ENCODE measurements at regions of chr18 and their contacts with region 1.

Region 1: GRCh38 chr18:76803814-76804213 is 18.5 kb upstream of the ZNF236 start:
- DNase-seq: peak; percentile 46 to 82 (median 75)
- ATAC-seq: peak; percentile 84
- H3K4me3 ChIP-seq: no peak overlapping the region
- H3K4me3 Mint-ChIP-seq: peak overlapping the region; percentile 43
- H3K27ac ChIP-seq: no peak overlapping the region
- H3K27ac Mint-ChIP-seq: no peak overlapping the region
- H3K4me1 ChIP-seq: peaks cover 7% of the 10 kb centered on the region
- H3K4me1 Mint-ChIP-seq: peaks cover 12% of the 10 kb centered on the region
- H3K27me3 ChIP-seq: peaks cover 0 to 5% of the 10 kb centered on the region in 2 experiments
- H3K27me3 Mint-ChIP-seq: peaks cover 16% of the 10 kb centered on the region
- CTCF ChIP-seq: peak; percentile 74

Region 2: GRCh38 chr18:76730901-76731300 is 72.9 kb before region 1 on chr18:
- CTCF ChIA-PET with region 1: no interaction called
- POLR2A ChIA-PET with region 1: no interaction called
- intact Hi-C with region 1: no loop called
- DNase-seq: no peak
- ATAC-seq: no peak
- H3K4me3 ChIP-seq: no peak overlapping the region
- H3K4me3 Mint-ChIP-seq: no peak overlapping the region
- H3K27ac ChIP-seq: no peak overlapping the region
- H3K27ac Mint-ChIP-seq: no peak overlapping the region
- H3K4me1 ChIP-seq: no peaks in the 10 kb centered on the region
- H3K4me1 Mint-ChIP-seq: peaks cover 5% of the 10 kb centered on the region
- H3K27me3 ChIP-seq: no peaks in the 10 kb centered on the region
- H3K27me3 Mint-ChIP-seq: peaks cover 11% of the 10 kb centered on the region
- CTCF ChIP-seq: no peak

Region 3: GRCh38 chr18:76783759-76784484 is 19.9 kb before region 1 on chr18:
- CTCF ChIA-PET with region 1: interaction called, 69 read pairs
- POLR2A ChIA-PET with region 1: no interaction called
- intact Hi-C with region 1: no loop called
- DNase-seq: no peak
- ATAC-seq: no peak
- H3K4me3 ChIP-seq: no peak overlapping the region
- H3K4me3 Mint-ChIP-seq: no peak overlapping the region
- H3K27ac ChIP-seq: no peak overlapping the region
- H3K27ac Mint-ChIP-seq: no peak overlapping the region
- H3K4me1 ChIP-seq: no peaks in the 10 kb centered on the region
- H3K4me1 Mint-ChIP-seq: no peaks in the 10 kb centered on the region
- H3K27me3 ChIP-seq: peaks cover 0 to 3% of the 10 kb centered on the region in 2 experiments
- H3K27me3 Mint-ChIP-seq: peaks cover 27% of the 10 kb centered on the region
- CTCF ChIP-seq: no peak

Region 4: DNA sequence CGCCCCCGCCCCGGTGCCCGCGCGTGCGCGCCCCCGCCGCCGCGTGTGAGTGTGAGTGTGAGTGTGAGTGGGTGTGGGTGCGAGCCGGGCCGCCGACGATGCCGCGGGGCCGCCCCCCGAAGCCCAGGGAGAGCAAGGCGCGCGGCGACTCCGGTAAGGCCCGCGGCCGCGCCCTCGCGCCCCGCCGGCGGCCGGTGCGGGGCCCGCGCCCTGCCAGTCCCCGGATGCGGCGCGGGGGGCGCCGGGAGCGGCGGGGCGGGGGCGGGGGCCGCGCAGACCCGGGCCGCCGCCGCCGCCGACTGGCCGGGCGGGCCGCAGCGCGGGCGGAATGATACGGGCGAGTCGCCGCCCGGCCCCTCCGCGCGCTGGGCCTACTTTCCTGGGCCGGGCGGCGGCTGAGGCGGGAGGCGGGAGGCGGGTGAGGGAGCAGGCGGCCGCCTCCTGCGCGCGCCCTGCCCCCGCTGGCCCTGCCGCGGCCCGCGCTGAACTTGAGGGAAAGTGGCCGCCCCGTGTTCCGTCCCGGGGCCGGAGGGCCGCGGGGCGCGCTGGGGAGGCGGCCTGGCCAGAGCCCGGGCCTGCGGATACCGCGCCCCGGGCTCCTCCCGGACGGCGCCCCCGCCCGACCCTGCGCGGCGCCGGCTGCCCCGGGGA is 18.8 kb after region 1 on chr18 and contains the start of gene ZNF236:
- CTCF ChIA-PET with region 1: interaction called, 22 read pairs
- POLR2A ChIA-PET with region 1: interaction called, 3 read pairs
- intact Hi-C with region 1: loop called in 1 of 2 experiments (anchors 1 kb)
- DNase-seq: peak; percentile 43 to 86 (median 68)
- ATAC-seq: peak; percentile 50
- H3K4me3 ChIP-seq: peak within 1 kb of the TSS; percentile 75 to 97
- H3K4me3 Mint-ChIP-seq: peak within 1 kb of the TSS; percentile 93
- H3K27ac ChIP-seq: peak within 1 kb of the TSS; percentile 67 to 91
- H3K27ac Mint-ChIP-seq: peak within 1 kb of the TSS; percentile 96
- H3K4me1 ChIP-seq: peaks cover 28% of the 10 kb centered on the region
- H3K4me1 Mint-ChIP-seq: peaks cover 50% of the 10 kb centered on the region
- H3K27me3 ChIP-seq: no peaks in the 10 kb centered on the region
- H3K27me3 Mint-ChIP-seq: no peaks in the 10 kb centered on the region
- CTCF ChIP-seq: no peak
- total RNA-seq, gene ZNF236: 24.9 to 25.4 TPM

Region 5: DNA sequence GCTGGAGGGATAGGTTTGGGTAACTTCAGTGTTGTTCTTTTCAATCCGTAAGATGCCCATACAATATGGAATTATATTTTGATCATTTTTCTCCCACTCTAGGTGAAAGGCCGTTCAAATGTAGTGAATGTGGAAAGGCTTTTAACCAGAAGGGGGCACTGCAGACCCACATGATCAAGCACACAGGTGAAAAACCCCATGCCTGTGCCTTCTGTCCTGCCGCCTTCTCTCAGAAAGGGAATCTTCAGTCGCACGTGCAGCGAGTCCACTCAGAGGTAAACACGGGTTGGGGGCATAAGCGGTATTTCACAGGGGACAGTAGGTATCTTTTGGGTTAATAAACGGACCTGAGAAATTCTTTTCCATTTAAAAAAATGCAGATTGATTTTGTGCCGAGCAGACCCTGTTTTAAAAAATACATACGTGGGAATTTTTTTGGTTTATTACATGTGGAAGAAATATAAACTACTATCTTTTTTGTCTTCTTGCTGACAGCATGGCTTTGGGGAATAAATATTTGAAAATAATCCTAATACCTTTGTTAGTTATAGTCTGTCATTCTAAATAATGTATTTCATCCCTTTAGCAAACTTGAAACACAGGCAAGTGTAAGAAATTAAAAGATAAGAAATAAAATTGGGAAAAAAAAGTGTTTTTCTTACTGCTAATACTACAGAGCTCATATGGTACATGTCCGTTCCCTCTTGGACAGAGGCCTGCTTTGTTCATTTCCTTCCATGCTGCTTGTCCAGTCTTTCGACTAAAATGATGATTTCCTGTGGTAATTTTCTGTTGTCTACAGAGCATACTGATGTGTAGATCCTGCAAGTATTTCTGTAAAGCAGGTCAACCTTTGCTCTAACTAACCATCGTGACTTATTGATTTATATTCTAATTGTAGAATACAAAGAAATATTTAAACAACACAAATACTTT is 71.8 kb after region 1 on chr18:
- CTCF ChIA-PET with region 1: interaction called, 6 read pairs
- POLR2A ChIA-PET with region 1: no interaction called
- intact Hi-C with region 1: loop called (anchors 2 to 5 kb)
- DNase-seq: peak in 4 of 9 experiments; percentile 29 to 61 (median 45)
- ATAC-seq: peak; percentile 58
- H3K4me3 ChIP-seq: no peak overlapping the region
- H3K4me3 Mint-ChIP-seq: no peak overlapping the region
- H3K27ac ChIP-seq: no peak overlapping the region
- H3K27ac Mint-ChIP-seq: no peak overlapping the region
- H3K4me1 ChIP-seq: no peaks in the 10 kb centered on the region
- H3K4me1 Mint-ChIP-seq: no peaks in the 10 kb centered on the region
- H3K27me3 ChIP-seq: no peaks in the 10 kb centered on the region
- H3K27me3 Mint-ChIP-seq: no peaks in the 10 kb centered on the region
- CTCF ChIP-seq: peak; percentile 62

Region 6: GRCh38 chr18:76982841-76983587 is 179.2 kb after region 1 on chr18:
- CTCF ChIA-PET with region 1: interaction called, 101 read pairs
- POLR2A ChIA-PET with region 1: no interaction called
- intact Hi-C with region 1: loop called (anchors 1 kb)
- DNase-seq: peak; percentile 72 to 89 (median 84)
- ATAC-seq: peak; percentile 100
- H3K4me3 ChIP-seq: no peak overlapping the region
- H3K4me3 Mint-ChIP-seq: no peak overlapping the region
- H3K27ac ChIP-seq: no peak overlapping the region
- H3K27ac Mint-ChIP-seq: no peak overlapping the region
- H3K4me1 ChIP-seq: peaks cover 3% of the 10 kb centered on the region
- H3K4me1 Mint-ChIP-seq: peaks cover 7% of the 10 kb centered on the region
- H3K27me3 ChIP-seq: no peaks in the 10 kb centered on the region
- H3K27me3 Mint-ChIP-seq: no peaks in the 10 kb centered on the region
- CTCF ChIP-seq: peak; percentile 93

Region 7: DNA sequence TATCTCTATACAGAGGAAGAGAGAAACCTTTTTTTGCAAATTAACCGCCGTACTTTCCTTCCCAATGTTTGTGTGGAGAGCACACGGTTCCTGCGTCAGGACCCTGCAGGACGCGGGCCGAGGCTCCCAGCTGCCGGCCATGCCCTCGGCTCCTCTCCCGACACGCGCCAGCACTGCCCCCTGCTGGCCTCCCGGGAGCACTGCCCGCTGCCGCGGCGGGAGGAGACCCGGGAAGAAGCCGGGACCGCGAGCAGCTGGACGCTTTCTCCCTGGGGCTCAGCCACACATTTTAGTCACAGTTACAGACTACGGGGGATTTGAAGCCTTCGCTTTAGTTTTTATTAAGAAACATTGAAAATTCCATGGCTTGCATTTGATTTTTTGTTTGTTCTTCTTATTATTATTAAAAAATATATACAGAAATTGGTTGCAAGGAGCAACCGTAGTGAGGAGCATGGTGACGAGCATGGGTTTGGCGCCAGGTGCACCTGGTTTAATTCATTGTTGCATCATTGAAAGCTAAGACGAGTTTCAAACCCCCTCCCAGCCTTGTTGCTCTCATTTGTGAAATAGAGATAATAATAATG is 847.1 kb after region 1 on chr18:
- CTCF ChIA-PET with region 1: interaction called, 4 read pairs
- POLR2A ChIA-PET with region 1: no interaction called
- intact Hi-C with region 1: loop called in 1 of 2 experiments (anchors 5 kb)
- DNase-seq: peak in 8 of 9 experiments; percentile 14 to 68 (median 44)
- ATAC-seq: peak; percentile 38
- H3K4me3 ChIP-seq: no peak overlapping the region
- H3K4me3 Mint-ChIP-seq: no peak overlapping the region
- H3K27ac ChIP-seq: no peak overlapping the region
- H3K27ac Mint-ChIP-seq: no peak overlapping the region
- H3K4me1 ChIP-seq: peaks cover 5% of the 10 kb centered on the region
- H3K4me1 Mint-ChIP-seq: peaks cover 1% of the 10 kb centered on the region
- H3K27me3 ChIP-seq: peaks cover 0 to 3% of the 10 kb centered on the region in 2 experiments
- H3K27me3 Mint-ChIP-seq: peaks cover 15% of the 10 kb centered on the region
- CTCF ChIP-seq: peak; percentile 54

Measured in CD8-positive, alpha-beta T cell (primary cell).